Posterior cingulate gyrus (tissue), 11 donors: ENCODE measurements at regions of chr5 and their contacts with region 1.

Region 1: DNA sequence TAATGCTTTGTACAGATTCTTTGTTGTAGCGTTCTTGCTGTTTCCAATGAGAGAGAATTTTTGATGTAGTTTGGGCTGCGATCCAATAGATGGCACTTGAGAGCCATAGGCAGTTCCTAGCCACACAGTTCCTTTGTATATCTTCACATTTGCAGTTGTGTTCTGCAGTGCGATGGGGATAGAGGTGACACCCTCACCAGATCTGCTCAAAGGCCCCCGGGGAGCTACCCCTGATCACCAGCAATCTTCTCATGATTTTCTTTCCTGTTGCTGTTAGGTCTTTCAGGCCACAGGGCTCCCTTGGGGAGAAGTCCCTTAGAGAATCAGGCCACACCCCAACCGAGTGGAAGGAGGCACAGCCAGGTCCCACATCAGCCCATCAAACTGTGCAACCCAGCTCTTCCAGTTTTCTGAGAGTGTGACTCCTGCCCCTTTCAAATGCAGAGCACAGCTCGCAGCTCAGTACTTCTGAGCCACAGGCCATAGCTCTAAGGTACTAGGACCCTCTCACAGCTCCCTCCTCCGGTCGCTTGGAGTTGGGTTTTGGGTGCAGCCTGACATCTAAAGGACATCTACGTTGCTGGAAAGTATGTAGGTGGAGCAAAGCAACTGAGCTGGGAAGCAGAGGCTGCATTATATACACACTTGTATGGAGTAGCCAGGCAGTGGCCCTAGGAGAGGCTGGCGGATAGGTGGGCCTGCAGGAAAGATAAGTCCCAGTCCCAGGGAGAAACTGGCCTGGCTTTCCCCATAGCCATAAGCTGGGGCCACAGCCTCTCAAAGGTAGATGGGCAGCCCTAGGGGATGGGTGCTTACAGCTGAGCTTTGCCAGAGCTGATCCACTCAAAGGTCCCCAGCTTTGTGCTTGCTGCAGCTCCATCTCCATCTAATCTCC is 353.5 kb downstream of the SLCO4C1 start:
- DNase-seq: peak in 3 of 10 donors; percentile 4 to 58 (median 20)

Region 2: DNA sequence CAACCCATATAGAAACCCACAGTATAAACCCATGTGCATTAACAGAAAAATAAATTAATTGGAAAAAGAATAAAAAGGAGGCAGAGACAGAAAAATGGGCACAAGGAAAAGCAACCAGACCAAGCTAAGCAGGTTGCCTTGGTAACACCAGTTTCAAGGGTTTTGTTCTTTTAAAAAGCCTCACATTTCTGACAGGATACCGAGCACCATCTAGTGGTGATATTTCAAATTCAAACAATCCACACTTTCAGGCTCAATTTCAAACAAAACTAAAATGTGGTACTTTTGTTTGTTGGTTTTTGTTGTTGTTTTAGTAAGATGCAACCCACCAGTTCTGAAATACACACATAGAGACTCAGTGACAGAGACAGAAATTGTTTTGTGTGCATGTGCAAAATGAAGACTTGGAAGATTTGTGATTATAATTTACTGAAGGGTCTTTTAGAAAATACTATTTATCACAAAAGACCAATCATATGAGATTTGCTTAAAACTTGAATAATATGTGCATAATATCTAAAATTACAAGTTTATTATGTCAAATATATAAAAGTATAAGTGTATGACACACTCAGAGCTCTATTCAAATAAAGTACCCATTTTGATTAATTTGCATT is 35.3 kb after region 1 on chr5:
- intact Hi-C with region 1: loop called (anchors 5 kb)
- DNase-seq: no peak

Region 3: DNA sequence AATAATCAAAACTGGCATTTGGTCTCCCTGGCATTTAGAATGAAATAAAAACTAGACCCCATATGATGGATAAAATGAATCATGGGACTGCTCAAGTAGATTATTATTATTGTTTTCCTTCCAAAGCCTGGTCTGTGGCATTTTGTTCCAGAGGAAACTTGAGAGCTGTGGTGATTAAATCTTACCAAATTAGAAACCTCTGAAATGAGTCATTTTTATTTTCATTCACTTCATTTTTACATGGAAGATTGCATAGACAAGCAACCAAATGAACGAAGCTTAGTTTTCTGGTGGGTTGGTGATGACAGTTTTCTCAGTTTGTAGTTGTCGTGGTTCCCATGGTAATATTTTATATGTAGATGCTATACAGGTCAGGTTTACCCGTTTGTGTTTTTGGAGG is 835.9 kb after region 1 on chr5:
- intact Hi-C with region 1: no loop called
- DNase-seq: no peak